ENCODE measurements at regions of chr21 and their contacts with region 1.

Region 1: GRCh38 chr21:18041012-18041411 is 203.6 kb upstream of the CHODL start:
- DNase-seq: no peak
- H3K4me3 ChIP-seq: no peak overlapping the region
- H3K27ac ChIP-seq: no peak overlapping the region
- H3K4me1 ChIP-seq: no peaks in the 10 kb centered on the region
- H3K27me3 ChIP-seq: no peaks in the 10 kb centered on the region
- CTCF ChIP-seq: peak in 2 of 3 experiments; percentile 70 to 73; a peak in 3 of 4 replicates
- EP300 ChIP-seq: no peak
- POLR2A ChIP-seq: no peak
- RAD21 ChIP-seq: peak; percentile 86 to 90

Region 2: GRCh38 chr21:18030248-18030647 is 10.8 kb before region 1 on chr21:
- CTCF ChIA-PET with region 1: interaction called, 16 read pairs
- POLR2A ChIA-PET with region 1: no interaction called
- DNase-seq: no peak
- H3K4me3 ChIP-seq: no peak overlapping the region
- H3K27ac ChIP-seq: no peak overlapping the region
- H3K4me1 ChIP-seq: no peaks in the 10 kb centered on the region
- H3K27me3 ChIP-seq: no peaks in the 10 kb centered on the region
- CTCF ChIP-seq: no peak
- EP300 ChIP-seq: no peak
- POLR2A ChIP-seq: no peak
- RAD21 ChIP-seq: no peak

Region 3: DNA sequence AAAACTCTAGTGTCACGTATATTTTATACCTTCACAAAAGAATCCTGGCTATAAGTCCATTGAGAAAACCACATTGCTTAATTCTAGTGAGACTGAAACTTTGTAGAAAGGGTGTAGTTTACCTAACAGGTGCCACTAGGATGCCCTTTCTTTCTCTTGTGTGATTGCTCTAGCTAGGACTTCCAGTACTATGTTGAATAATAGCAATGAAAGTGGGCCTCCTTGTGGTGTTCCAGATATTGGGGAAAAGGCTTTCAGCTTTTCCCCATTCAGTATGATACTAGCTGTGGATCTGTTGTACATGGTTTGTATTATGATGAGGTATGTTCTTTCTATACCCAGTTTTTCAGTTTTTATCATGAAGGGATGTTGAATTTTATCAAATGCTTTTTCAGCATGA is 163.9 kb after region 1 on chr21:
- CTCF ChIA-PET with region 1: interaction called, 18 read pairs
- POLR2A ChIA-PET with region 1: no interaction called
- DNase-seq: no peak
- H3K4me3 ChIP-seq: no peak overlapping the region
- H3K27ac ChIP-seq: no peak overlapping the region
- H3K4me1 ChIP-seq: no peaks in the 10 kb centered on the region
- H3K27me3 ChIP-seq: no peaks in the 10 kb centered on the region
- CTCF ChIP-seq: peak in 2 of 3 experiments; percentile 19 to 24; a peak in 2 of 4 replicates
- EP300 ChIP-seq: no peak
- POLR2A ChIP-seq: no peak
- RAD21 ChIP-seq: peak; percentile 49 to 56

Region 4: GRCh38 chr21:18249672-18250071 is 208.7 kb after region 1 on chr21:
- CTCF ChIA-PET with region 1: interaction called, 12 read pairs
- POLR2A ChIA-PET with region 1: no interaction called
- DNase-seq: no peak
- H3K4me3 ChIP-seq: no peak overlapping the region
- H3K27ac ChIP-seq: no peak overlapping the region
- H3K4me1 ChIP-seq: peaks cover 0 to 9% (median 2%) of the 10 kb centered on the region in 4 experiments; a peak in 3 of 7 replicates
- H3K27me3 ChIP-seq: peaks cover 12 to 17% (median 16%) of the 10 kb centered on the region in 4 experiments
- CTCF ChIP-seq: peak in 2 of 3 experiments; percentile 57 to 61; a peak in 3 of 4 replicates
- EP300 ChIP-seq: no peak
- POLR2A ChIP-seq: no peak
- RAD21 ChIP-seq: peak; percentile 60 to 62

Measured in H1 (cell line).